ENCODE measurements at regions of chr7 and their contacts with region 1.

Region 1: GRCh38 chr7:992709-993607 is 10.0 kb downstream of the CYP2W1 start:
- DNase-seq: peak; percentile 99
- H3K4me3 ChIP-seq: no peak overlapping the region
- H3K27ac ChIP-seq: no peak overlapping the region
- H3K4me1 ChIP-seq: peaks cover 6% of the 10 kb centered on the region
- H3K27me3 ChIP-seq: no peaks in the 10 kb centered on the region
- CTCF ChIP-seq: peak; percentile 99

Region 2: GRCh38 chr7:1065263-1066260 is 72.6 kb after region 1 on chr7:
- intact Hi-C with region 1: loop called (anchors 2 kb)
- DNase-seq: peak; percentile 86
- H3K4me3 ChIP-seq: no peak overlapping the region
- H3K27ac ChIP-seq: no peak overlapping the region
- H3K4me1 ChIP-seq: no peaks in the 10 kb centered on the region
- H3K27me3 ChIP-seq: no peaks in the 10 kb centered on the region
- CTCF ChIP-seq: peak; percentile 82

Region 3: GRCh38 chr7:1175967-1176851 is 183.3 kb after region 1 on chr7:
- intact Hi-C with region 1: loop called (anchors 5 kb)
- DNase-seq: peak; percentile 94
- H3K4me3 ChIP-seq: peak overlapping the region; percentile 20
- H3K27ac ChIP-seq: no peak overlapping the region
- H3K4me1 ChIP-seq: no peaks in the 10 kb centered on the region
- H3K27me3 ChIP-seq: no peaks in the 10 kb centered on the region
- CTCF ChIP-seq: peak; percentile 91

Region 4: GRCh38 chr7:1268738-1269313 is 275.9 kb after region 1 on chr7:
- intact Hi-C with region 1: no loop called
- DNase-seq: no peak
- H3K4me3 ChIP-seq: no peak overlapping the region
- H3K27ac ChIP-seq: no peak overlapping the region
- H3K4me1 ChIP-seq: no peaks in the 10 kb centered on the region
- H3K27me3 ChIP-seq: peaks cover 8% of the 10 kb centered on the region
- CTCF ChIP-seq: no peak